Mammary epithelial cell (primary cell): ENCODE measurements at regions of chr14 and their contacts with region 1.

Region 1: DNA sequence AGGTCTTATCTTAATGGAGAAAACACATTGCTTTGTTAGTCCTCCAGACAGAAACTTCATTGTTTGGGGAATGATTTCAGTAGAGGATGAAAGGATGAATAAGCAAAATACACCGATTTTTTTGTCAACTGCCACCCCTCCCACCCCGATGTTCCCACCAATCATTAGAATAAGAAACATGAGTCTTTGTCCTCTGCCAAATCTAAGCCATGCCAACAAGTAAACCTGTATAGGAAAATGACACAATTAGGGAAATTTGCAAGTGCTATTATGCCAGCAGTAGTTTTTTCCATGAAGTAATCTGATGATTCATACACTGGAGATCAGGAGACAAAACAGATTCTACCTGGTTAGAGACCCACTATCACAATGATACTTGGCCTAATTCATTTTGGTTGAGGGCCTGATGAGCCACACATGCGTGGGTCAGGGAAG is 35.9 kb downstream of the FLRT2 start:
- DNase-seq: peak; percentile 95
- H3K4me3 ChIP-seq: no peak overlapping the region
- H3K27ac ChIP-seq: peak overlapping the region; percentile 99
- H3K4me1 ChIP-seq: peaks cover 26% of the 10 kb centered on the region
- H3K27me3 ChIP-seq: no peaks in the 10 kb centered on the region
- CTCF ChIP-seq: no peak

Region 2: GRCh38 chr14:85539510-85539909 is 26.4 kb before region 1 on chr14:
- CTCF ChIA-PET with region 1: no interaction called
- dilution Hi-C with region 1: no loop called
- in situ Hi-C with region 1: no loop called
- intact Hi-C with region 1: no loop called
- DNase-seq: no peak
- H3K4me3 ChIP-seq: no peak overlapping the region
- H3K27ac ChIP-seq: no peak overlapping the region
- H3K4me1 ChIP-seq: peaks cover 15% of the 10 kb centered on the region
- H3K27me3 ChIP-seq: no peaks in the 10 kb centered on the region
- CTCF ChIP-seq: no peak

Region 3: GRCh38 chr14:85554106-85554505 is 11.8 kb before region 1 on chr14:
- CTCF ChIA-PET with region 1: no interaction called
- dilution Hi-C with region 1: no loop called
- in situ Hi-C with region 1: no loop called
- intact Hi-C with region 1: no loop called
- DNase-seq: no peak
- H3K4me3 ChIP-seq: no peak overlapping the region
- H3K27ac ChIP-seq: no peak overlapping the region
- H3K4me1 ChIP-seq: peaks cover 12% of the 10 kb centered on the region
- H3K27me3 ChIP-seq: no peaks in the 10 kb centered on the region
- CTCF ChIP-seq: no peak

Region 4: GRCh38 chr14:85596562-85596961 is 30.7 kb after region 1 on chr14:
- CTCF ChIA-PET with region 1: no interaction called
- dilution Hi-C with region 1: no loop called
- in situ Hi-C with region 1: no loop called
- intact Hi-C with region 1: no loop called
- DNase-seq: no peak
- H3K4me3 ChIP-seq: no peak overlapping the region
- H3K27ac ChIP-seq: no peak overlapping the region
- H3K4me1 ChIP-seq: no peaks in the 10 kb centered on the region
- H3K27me3 ChIP-seq: no peaks in the 10 kb centered on the region
- CTCF ChIP-seq: no peak

Region 5: DNA sequence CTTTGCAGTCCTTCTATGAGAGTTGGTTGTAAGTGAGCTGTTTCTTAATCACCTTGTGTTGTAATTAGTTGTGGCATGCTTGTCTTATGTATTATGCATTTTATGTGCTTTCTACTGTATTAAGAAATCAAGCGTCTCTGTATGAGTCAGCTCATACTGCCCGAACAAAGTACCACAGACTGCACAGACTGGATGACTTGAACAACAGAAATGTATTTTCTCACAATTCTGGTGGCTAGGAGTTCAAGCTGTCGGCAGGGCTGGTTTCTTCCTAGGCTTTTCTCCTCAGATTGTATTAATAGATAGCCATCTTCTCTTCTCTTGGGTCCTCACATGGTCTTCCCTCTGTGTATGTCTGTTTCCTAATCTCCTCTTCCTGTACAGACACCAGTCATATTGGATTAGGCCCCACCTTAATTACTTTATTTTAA is 41.8 kb after region 1 on chr14:
- CTCF ChIA-PET with region 1: no interaction called
- dilution Hi-C with region 1: no loop called
- in situ Hi-C with region 1: no loop called
- intact Hi-C with region 1: loop called (anchors 5 kb)
- DNase-seq: peak; percentile 92
- H3K4me3 ChIP-seq: peak overlapping the region in 1 of 3 experiments; percentile 8
- H3K27ac ChIP-seq: peak overlapping the region; percentile 73
- H3K4me1 ChIP-seq: peaks cover 16% of the 10 kb centered on the region
- H3K27me3 ChIP-seq: no peaks in the 10 kb centered on the region
- CTCF ChIP-seq: no peak